Gastrocnemius medialis (tissue), 4 donors: ENCODE measurements at regions of chr9 and their contacts with region 1.

Region 1: DNA sequence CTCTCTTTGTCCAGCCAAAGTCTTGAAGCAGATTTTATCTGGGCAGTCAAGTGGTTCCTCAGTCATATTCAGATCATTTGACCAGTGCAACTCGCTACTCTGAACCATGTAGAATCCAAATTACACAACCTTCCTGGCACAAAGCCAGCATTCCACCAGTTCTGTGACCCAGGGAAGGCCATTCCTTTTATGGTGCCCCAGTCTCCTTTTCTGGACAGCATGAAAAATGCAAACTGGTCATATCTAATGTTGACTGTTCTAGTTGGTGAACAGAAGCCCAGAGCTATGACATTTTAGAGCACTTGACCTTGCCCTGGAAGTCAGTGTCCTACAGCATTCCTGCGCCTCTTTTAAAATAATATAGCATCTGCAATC is 364.6 kb downstream of the BRINP1 start:
- DNase-seq: peak; percentile 87 to 90
- ATAC-seq: peak; percentile 93 to 96
- H3K4me3 ChIP-seq: no peak overlapping the region
- H3K27ac ChIP-seq: peak overlapping the region; percentile 77 to 86 (median 84)
- H3K4me1 ChIP-seq: peaks cover 19 to 28% of the 10 kb centered on the region in 2 donors
- H3K27me3 ChIP-seq: no peaks in the 10 kb centered on the region
- CTCF ChIP-seq: no peak
- POLR2A ChIP-seq: no peak

Region 2: DNA sequence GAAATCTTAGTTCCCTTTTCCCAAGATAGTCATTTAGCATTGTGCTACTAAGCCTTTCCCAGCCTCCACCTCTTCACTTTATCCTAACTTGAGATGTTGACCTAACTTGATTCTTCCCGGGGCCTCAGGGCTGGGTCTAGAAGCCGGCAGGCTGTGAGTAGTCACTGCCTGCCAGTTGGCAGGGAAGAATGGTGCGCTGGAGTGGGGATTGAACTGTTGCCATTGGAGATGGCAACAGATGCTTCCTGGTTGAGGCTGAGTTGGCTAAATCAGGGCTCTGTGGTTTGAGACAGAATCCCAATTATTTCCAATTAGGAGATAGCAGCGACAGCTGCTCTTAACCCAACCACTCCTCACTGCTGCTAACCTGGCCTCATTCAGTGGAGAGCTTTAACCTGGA is 21.5 kb after region 1 on chr9:
- in situ Hi-C with region 1: no loop called
- intact Hi-C with region 1: loop called (anchors 2 kb)
- DNase-seq: peak; percentile 37 to 50
- ATAC-seq: peak; percentile 24 to 32
- H3K4me3 ChIP-seq: no peak overlapping the region
- H3K27ac ChIP-seq: peak overlapping the region; percentile 85 to 94 (median 90)
- H3K4me1 ChIP-seq: peaks cover 21 to 39% of the 10 kb centered on the region in 2 donors
- H3K27me3 ChIP-seq: no peaks in the 10 kb centered on the region
- CTCF ChIP-seq: no peak
- POLR2A ChIP-seq: no peak

Region 3: GRCh38 chr9:119689879-119690278 is 685.3 kb after region 1 on chr9:
- in situ Hi-C with region 1: no loop called
- intact Hi-C with region 1: no loop called
- DNase-seq: no peak
- ATAC-seq: no peak
- H3K4me3 ChIP-seq: no peak overlapping the region
- H3K27ac ChIP-seq: no peak overlapping the region
- H3K4me1 ChIP-seq: no peaks in the 10 kb centered on the region
- H3K27me3 ChIP-seq: no peaks in the 10 kb centered on the region
- CTCF ChIP-seq: no peak
- POLR2A ChIP-seq: no peak